ENCODE measurements at regions of chr16 and their contacts with region 1.

Region 1: DNA sequence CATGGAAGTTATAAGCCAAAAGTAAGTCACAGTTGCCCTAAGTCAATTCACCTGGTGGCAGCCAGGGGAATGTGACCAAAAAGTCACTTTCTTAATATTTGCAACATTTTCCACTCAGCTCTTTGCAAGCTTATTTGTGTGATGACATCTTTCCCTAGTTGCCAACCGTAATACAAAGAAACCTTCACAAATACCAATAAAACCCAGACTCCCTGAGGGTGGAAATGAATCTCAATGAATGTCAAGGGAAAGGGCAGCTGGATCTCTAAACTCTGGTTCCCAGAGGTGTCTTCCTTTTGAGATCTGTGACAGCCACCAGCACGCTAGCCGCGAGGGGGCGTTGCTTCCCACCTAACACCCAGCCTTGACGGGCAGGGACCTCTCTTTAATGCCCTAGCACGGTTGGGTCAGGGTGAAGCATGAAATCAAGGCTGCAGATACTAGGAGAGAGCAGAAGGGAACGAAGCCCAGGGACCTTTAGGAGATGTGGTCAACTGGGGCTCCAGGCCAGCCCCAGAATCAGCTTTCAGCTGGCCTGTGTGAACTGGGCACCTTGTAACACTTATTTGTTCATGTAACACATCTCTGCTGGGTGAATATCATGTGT is 82.2 kb downstream of the CMC2 start:
- DNase-seq: no peak
- H3K4me3 ChIP-seq: no peak overlapping the region
- H3K27me3 ChIP-seq: no peaks in the 10 kb centered on the region
- CTCF ChIP-seq: peak; percentile 84

Region 2: DNA sequence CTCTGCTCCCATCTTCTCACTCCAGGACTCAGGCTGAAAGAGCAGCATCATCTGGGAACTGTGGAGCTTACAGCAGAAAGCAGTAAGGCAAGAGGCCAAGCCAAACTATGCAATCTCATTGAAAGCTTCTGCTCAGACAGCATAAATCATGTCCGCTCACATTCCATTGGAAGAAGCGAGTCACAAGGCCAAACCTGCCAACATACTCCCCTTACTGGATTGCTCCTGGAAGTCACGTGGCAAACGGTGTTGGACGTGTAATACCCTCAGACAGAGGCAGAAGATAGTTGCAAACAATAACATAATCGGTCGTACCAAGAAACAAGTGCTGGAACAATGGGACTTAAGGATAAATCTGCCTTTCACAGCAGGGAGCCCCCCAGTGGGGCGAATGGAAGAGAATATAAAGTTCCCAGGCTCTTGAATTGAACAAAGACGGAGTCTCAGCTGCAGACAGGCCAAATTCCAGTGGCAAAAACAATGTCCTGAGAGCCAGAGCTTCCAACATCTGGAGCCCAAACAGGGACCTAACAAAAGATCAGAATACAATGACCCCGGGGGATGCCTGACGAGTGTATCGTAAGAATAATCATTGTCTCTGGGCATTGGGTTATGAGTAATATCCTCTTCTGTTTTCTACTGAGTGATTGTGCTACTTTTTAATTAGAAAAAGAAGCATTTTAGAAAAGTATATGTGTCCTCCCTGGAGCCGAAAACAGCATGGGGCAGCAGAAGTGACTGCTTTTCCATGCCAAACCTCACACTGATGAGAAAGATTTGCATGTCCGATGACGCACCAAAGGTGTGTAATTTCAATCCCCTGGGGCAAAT is 13.8 kb after region 1 on chr16:
- CTCF ChIA-PET with region 1: interaction called, 18 read pairs
- POLR2A ChIA-PET with region 1: no interaction called
- DNase-seq: peak; percentile 98
- H3K4me3 ChIP-seq: 0 out of 2 replicates have a peak overlapping the region, but pooled peaks have one; percentile 1
- H3K27me3 ChIP-seq: no peaks in the 10 kb centered on the region
- CTCF ChIP-seq: no peak

Region 3: GRCh38 chr16:80948886-80949493 is 24.5 kb after region 1 on chr16:
- CTCF ChIA-PET with region 1: interaction called, 45 read pairs
- POLR2A ChIA-PET with region 1: no interaction called
- DNase-seq: no peak
- H3K4me3 ChIP-seq: no peak overlapping the region
- H3K27me3 ChIP-seq: no peaks in the 10 kb centered on the region
- CTCF ChIP-seq: peak; percentile 73

Region 4: DNA sequence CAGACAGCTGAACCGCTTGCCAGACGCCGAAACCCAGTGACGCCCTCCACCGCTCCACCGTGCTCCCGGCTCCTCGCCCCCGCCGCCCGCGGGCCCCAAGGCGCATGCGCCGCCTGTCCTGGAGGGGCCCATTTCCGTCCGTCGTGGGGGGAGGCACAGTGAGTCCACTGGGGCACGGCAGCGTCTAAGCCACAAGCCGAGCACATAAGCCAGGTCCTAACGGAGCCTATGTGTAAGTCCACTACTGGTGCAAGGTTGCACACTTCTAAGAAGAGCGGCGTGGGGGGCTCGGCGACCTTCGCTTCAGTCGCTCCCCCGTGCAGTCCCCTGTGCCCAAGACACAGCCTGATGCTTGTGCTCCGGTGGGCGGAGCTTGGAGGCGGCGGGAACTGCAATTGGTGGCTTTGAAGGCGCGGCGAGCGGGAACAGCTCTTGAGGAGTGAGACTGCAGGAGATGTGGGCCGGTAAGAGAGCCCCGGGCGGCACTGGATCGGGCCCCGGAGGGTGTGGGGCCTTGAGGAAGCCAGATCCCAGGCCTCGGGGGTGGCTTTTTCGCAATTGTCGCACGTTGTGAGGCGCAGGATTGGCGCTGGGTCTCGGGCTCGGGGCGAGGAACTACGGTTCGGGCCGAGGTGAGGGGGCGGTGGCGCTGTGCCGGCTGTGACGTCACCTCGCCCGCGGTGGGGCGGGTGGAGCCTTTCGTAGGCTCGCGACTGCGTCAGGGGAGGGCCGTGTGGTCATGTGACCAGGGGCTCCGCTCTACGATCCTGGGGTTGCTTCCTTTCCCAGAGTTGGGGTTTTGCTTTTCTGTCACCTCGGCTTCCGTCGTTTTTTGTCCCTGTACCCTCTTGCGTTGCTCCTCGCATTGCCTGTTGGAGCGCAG is 82.6 kb after region 1 on chr16 and contains the starts of genes CENPN and CMC2:
- CTCF ChIA-PET with region 1: interaction called, 17 read pairs
- POLR2A ChIA-PET with region 1: no interaction called
- DNase-seq: peak; percentile 95
- H3K4me3 ChIP-seq: peak within 1 kb of the TSS; percentile 95
- H3K27me3 ChIP-seq: no peaks in the 10 kb centered on the region
- CTCF ChIP-seq: peak; percentile 19; the same call in 1 of the 2 replicates
- polyA plus RNA-seq, gene CENPN: 24.8 and 38.2 TPM in 2 replicates
- polyA plus RNA-seq, gene CMC2: 56.4 and 101 TPM in 2 replicates

Measured in BJ (cell line).